Activated CD8-positive, alpha-beta T cell treated with anti-CD3 and anti-CD28 coated beads for 36 hours (primary cell): ENCODE measurements at regions of chr17 and their contacts with region 1.

Region 1: DNA sequence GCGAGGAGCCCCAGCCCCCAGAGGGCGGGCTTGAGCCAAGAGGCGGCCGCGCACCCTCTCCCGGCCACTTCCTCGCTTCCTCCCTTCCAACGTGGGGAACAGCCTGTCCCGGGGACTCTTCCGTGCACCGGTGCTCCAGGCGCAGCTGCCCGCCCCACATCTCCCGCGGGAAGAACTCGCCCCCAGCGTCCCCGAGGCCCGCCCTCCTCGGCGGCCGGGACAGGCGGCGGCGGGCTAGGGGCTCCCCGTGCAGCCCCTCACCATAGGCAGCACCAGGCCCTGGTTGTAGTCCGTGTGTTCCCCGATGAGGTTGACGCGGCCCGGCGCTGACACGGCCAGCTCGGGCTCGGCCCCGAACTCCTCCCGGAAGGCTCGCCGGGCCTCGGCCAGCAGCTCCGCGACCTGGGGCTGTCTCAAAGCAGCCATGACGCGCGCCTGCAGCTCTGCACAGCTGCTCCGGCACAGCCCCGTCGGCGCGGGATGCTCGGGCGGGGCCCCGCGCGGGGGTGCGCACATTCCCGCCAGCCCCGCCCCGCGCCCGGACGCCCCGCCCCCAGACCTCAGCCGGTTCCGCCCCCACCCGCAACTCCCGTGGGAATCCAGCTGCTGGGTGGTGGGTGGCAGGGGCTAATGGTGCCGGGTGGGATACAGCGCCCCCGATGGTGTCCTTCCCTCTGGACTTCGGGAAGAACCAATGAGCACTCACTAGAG is at the start of gene GALK1:
- DNase-seq: peak; percentile 81
- ATAC-seq: peak; percentile 96
- H3K4me3 Mint-ChIP-seq: peak within 1 kb of the TSS; percentile 79
- H3K27ac Mint-ChIP-seq: peak within 1 kb of the TSS; percentile 78
- H3K4me1 Mint-ChIP-seq: peaks cover 10% of the 10 kb centered on the region
- H3K27me3 Mint-ChIP-seq: no peaks in the 10 kb centered on the region
- CTCF ChIP-seq: peak; percentile 78
- total RNA-seq, gene GALK1: 43.4 to 50.7 TPM

Region 2: GRCh38 chr17:75720725-75721462 is 44.0 kb before region 1 on chr17 and contains the start of gene ITGB4:
- CTCF ChIA-PET with region 1: no interaction called
- POLR2A ChIA-PET with region 1: no interaction called
- intact Hi-C with region 1: no loop called
- DNase-seq: peak; percentile 63
- ATAC-seq: peak; percentile 93
- H3K4me3 Mint-ChIP-seq: peak within 1 kb of the TSS; percentile 67
- H3K27ac Mint-ChIP-seq: no peak within 1 kb of the TSS
- H3K4me1 Mint-ChIP-seq: peaks cover 3% of the 10 kb centered on the region
- H3K27me3 Mint-ChIP-seq: peaks cover 9% of the 10 kb centered on the region
- CTCF ChIP-seq: peak; percentile 14
- total RNA-seq, gene ITGB4: 0.69 to 1.8 TPM

Region 3: GRCh38 chr17:75845049-75845860 is 80.4 kb after region 1 on chr17:
- CTCF ChIA-PET with region 1: interaction called, 11 read pairs
- POLR2A ChIA-PET with region 1: interaction called, 7 read pairs
- intact Hi-C with region 1: no loop called
- DNase-seq: peak; percentile 83
- ATAC-seq: peak; percentile 72
- H3K4me3 Mint-ChIP-seq: peak overlapping the region; percentile 96
- H3K27ac Mint-ChIP-seq: peak overlapping the region; percentile 75
- H3K4me1 Mint-ChIP-seq: peaks cover 30% of the 10 kb centered on the region
- H3K27me3 Mint-ChIP-seq: no peaks in the 10 kb centered on the region
- CTCF ChIP-seq: peak; percentile 72